Activated naive CD8-positive, alpha-beta T cell treated with anti-CD3 and anti-CD28 coated beads, Interleukin-2, amount 10 ng/mL, durations not matched to agents 7 days and 5 days (primary cell): ENCODE measurements at regions of chr14 and their contacts with region 1.

Region 1: GRCh38 chr14:93184388-93185353 is at the starts of genes LYSET and MOAP1:
- DNase-seq: peak; percentile 91
- ATAC-seq: peak; percentile 91
- H3K4me3 Mint-ChIP-seq: peak within 1 kb of the TSS; percentile 97
- H3K27ac Mint-ChIP-seq: peak within 1 kb of the TSS; percentile 92
- H3K4me1 Mint-ChIP-seq: peaks cover 26% of the 10 kb centered on the region
- H3K27me3 Mint-ChIP-seq: no peaks in the 10 kb centered on the region
- total RNA-seq, gene LYSET: 11.9 to 12.7 TPM
- total RNA-seq, gene MOAP1: 31.6 TPM

Region 2: GRCh38 chr14:93073358-93073707 is 111.3 kb before region 1 on chr14:
- POLR2A ChIA-PET with region 1: no interaction called
- DNase-seq: no peak
- ATAC-seq: no peak
- H3K4me3 Mint-ChIP-seq: peak overlapping the region; percentile 75
- H3K27ac Mint-ChIP-seq: peak overlapping the region; percentile 93
- H3K4me1 Mint-ChIP-seq: peaks cover 71% of the 10 kb centered on the region
- H3K27me3 Mint-ChIP-seq: no peaks in the 10 kb centered on the region

Region 3: GRCh38 chr14:93103392-93104080 is 81.1 kb before region 1 on chr14:
- POLR2A ChIA-PET with region 1: interaction called, 10 read pairs
- DNase-seq: peak; percentile 74
- ATAC-seq: peak; percentile 98
- H3K4me3 Mint-ChIP-seq: peak overlapping the region; percentile 90
- H3K27ac Mint-ChIP-seq: peak overlapping the region; percentile 97
- H3K4me1 Mint-ChIP-seq: peaks cover 45% of the 10 kb centered on the region
- H3K27me3 Mint-ChIP-seq: no peaks in the 10 kb centered on the region

Region 4: GRCh38 chr14:93206793-93207467 is 22.3 kb after region 1 on chr14 and contains the starts of genes GON7 and UBR7:
- POLR2A ChIA-PET with region 1: interaction called, 64 read pairs
- DNase-seq: peak; percentile 88
- ATAC-seq: peak; percentile 90
- H3K4me3 Mint-ChIP-seq: peak within 1 kb of the TSS; percentile 99
- H3K27ac Mint-ChIP-seq: peak within 1 kb of the TSS; percentile 90
- H3K4me1 Mint-ChIP-seq: peaks cover 36% of the 10 kb centered on the region
- H3K27me3 Mint-ChIP-seq: no peaks in the 10 kb centered on the region
- total RNA-seq, gene GON7: 17.3 to 17.7 TPM
- total RNA-seq, gene UBR7: 36.7 to 38.5 TPM